OCI-LY7 (cell line): ENCODE measurements at regions of chr16 and their contacts with region 1.

Region 1: GRCh38 chr16:8567750-8568617 is 22.3 kb downstream of the TMEM114 start:
- DNase-seq: peak; percentile 91
- H3K4me3 ChIP-seq: no peak overlapping the region
- H3K27ac ChIP-seq: no peak overlapping the region
- H3K4me1 ChIP-seq: no peaks in the 10 kb centered on the region
- CTCF ChIP-seq: peak; percentile 99

Region 2: GRCh38 chr16:8655184-8655717 is 87.3 kb after region 1 on chr16:
- CTCF ChIA-PET with region 1: no interaction called
- POLR2A ChIA-PET with region 1: no interaction called
- intact Hi-C with region 1: loop called (anchors 2 kb)
- DNase-seq: peak; percentile 56
- H3K4me3 ChIP-seq: no peak overlapping the region
- H3K27ac ChIP-seq: no peak overlapping the region
- H3K4me1 ChIP-seq: no peaks in the 10 kb centered on the region
- CTCF ChIP-seq: peak; percentile 73

Region 3: GRCh38 chr16:9008601-9009260 is 440.7 kb after region 1 on chr16:
- CTCF ChIA-PET with region 1: no interaction called
- POLR2A ChIA-PET with region 1: no interaction called
- intact Hi-C with region 1: loop called (anchors 1 kb)
- DNase-seq: peak; percentile 68
- H3K4me3 ChIP-seq: no peak overlapping the region
- H3K27ac ChIP-seq: no peak overlapping the region
- H3K4me1 ChIP-seq: no peaks in the 10 kb centered on the region
- CTCF ChIP-seq: peak; percentile 86